AG04450 (cell line): ENCODE measurements at regions of chr7 and their contacts with region 1.

Region 1: GRCh38 chr7:87506246-87507180 is 31.0 kb upstream of the ABCB4 start:
- DNase-seq: peak; percentile 15
- H3K4me3 ChIP-seq: no peak overlapping the region
- H3K27ac ChIP-seq: no peak overlapping the region
- H3K27me3 ChIP-seq: no peaks in the 10 kb centered on the region
- CTCF ChIP-seq: peak; percentile 54

Region 2: GRCh38 chr7:87517136-87517815 is 10.8 kb after region 1 on chr7:
- CTCF ChIA-PET with region 1: interaction called, 16 read pairs
- POLR2A ChIA-PET with region 1: no interaction called
- DNase-seq: no peak
- H3K4me3 ChIP-seq: no peak overlapping the region
- H3K27ac ChIP-seq: no peak overlapping the region
- H3K27me3 ChIP-seq: no peaks in the 10 kb centered on the region
- CTCF ChIP-seq: no peak

Region 3: GRCh38 chr7:88111136-88111743 is 604.7 kb after region 1 on chr7:
- CTCF ChIA-PET with region 1: interaction called, 12 read pairs
- POLR2A ChIA-PET with region 1: no interaction called
- DNase-seq: no peak
- H3K4me3 ChIP-seq: no peak overlapping the region
- H3K27ac ChIP-seq: no peak overlapping the region
- H3K27me3 ChIP-seq: no peaks in the 10 kb centered on the region
- CTCF ChIP-seq: peak; percentile 63

Region 4: DNA sequence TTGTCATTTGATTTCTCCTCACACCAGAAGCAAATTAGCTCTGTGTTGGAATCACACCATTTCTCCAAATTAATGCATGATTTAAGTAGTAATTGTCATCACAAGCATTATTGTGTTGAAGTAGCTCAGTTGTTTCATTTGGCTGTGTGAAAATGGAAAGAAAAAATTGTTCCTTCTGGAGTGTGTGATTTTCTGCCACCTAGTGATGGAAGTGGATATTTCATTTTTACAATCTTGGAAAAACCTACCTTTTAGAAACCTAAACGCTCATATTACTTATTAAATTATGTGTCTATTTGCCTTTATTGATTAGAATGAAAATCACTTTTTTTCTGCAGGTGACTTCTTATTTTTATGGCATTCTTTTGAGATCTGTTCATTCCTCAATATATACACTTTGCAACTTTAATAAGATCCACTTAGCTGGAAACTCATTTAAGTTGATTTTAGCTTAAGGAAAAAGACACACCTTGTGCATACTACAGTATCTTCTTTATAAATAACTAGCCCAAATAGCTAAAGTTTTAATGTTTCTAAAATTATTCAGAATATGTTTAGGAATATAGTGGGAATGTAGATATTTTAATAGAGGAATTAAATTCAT is 663.3 kb after region 1 on chr7:
- CTCF ChIA-PET with region 1: interaction called, 14 read pairs
- POLR2A ChIA-PET with region 1: no interaction called
- DNase-seq: no peak
- H3K4me3 ChIP-seq: no peak overlapping the region
- H3K27ac ChIP-seq: no peak overlapping the region
- H3K27me3 ChIP-seq: no peaks in the 10 kb centered on the region
- CTCF ChIP-seq: peak; percentile 61